ENCODE measurements at regions of chr3 and their contacts with region 1.

Region 1: DNA sequence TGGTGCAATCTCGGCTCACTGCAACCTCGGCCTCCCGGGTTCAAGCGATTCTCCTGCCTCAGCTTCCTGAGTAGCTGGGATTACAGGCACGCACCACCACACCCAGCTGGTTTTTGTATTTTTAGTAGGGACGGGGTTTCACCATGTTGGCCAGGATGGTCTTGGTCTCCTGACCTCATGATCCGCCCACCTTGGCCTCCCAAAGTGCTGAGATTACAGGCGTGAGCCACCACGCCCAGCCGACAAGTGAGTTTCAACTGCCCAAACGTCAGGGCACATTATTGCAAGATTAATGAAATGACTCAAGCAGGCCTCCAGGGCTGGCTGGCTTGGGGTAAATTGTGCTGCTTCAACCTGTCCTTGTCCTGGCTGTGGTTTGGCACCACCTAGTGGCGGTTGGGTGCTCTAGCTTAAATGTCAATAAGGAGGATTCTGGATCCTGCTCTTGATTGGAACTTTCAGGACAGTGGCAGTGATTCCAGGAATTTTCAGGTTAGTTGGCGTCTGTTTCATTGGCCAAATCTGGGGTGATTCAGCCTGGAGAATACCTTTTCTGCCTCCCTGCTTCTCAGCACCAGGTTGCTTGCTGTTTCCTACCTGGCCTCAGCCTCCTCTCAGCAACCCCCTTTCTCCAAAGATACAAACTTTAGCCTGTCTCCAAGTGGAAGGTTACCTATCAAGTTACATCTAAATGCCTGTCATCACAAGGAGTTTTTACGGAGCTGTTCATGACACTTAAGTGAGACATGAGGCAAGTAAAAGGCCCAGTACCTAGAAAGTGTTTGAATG is 32.4 kb upstream of the SACM1L start:
- DNase-seq: peak; percentile 97
- H3K4me3 ChIP-seq: no peak overlapping the region
- H3K27ac ChIP-seq: peak overlapping the region in 1 of 4 donors; percentile 22
- H3K4me1 ChIP-seq: peaks cover 24 to 60% (median 49%) of the 10 kb centered on the region in 4 donors
- H3K27me3 ChIP-seq: no peaks in the 10 kb centered on the region
- CTCF ChIP-seq: peak; percentile 92 to 94 (median 94)
- EP300 ChIP-seq: no peak
- POLR2A ChIP-seq: no peak

Region 2: DNA sequence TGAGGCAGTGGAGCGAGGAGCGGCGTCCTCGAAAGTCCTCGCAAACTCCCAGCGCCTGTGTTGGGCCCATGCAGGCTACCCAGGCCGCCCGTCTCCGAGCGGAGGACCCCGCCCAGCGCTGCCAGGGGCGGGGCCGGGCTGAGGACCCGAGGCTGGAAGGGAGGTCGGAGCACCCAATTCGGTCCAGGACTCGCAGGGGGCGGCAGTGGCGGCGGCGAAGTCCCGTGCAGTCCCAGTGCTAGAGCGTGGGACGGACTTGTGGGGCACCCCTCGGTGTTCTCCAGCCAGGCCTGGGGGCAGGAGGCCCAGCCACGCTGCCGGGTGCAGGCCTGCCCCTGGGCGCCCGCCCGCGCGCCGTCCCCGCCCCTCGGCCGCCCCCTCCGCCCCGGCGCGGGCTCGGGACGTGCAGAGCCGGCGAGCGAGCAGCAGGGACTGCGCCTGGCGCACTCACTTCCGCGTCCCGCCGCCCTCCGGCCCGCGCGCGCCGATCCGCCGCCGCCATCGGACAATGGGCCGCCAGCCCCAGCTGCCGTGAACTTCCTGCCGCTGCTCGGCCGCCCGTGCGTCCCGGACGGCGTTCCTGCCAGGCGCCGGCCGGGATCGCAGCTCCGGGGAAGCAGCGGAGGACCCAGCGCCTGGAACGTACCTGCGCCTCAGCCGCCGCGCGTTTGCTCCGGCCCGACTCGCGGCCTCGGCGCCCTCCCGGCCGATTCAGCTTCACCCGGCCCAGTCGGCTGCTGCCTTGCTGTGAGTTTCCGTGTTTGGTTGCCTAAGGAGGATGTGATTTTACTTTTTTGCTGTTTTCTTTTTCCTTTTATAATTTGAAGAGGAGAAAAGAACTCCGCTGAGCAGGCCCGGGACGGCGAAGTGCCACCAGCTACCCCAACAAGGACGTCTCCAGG is 62.8 kb before region 1 on chr3:
- intact Hi-C with region 1: loop called (anchors 2 kb)
- DNase-seq: no peak
- H3K4me3 ChIP-seq: peak overlapping the region; percentile 63 to 80 (median 70)
- H3K27ac ChIP-seq: peak overlapping the region; percentile 81 to 94 (median 88)
- H3K4me1 ChIP-seq: peaks cover 50 to 60% (median 59%) of the 10 kb centered on the region in 4 donors
- H3K27me3 ChIP-seq: no peaks in the 10 kb centered on the region
- CTCF ChIP-seq: no peak
- EP300 ChIP-seq: no peak
- POLR2A ChIP-seq: no peak